Mammary epithelial cell (primary cell): ENCODE measurements at regions of chr1 and their contacts with region 1.

Region 1: DNA sequence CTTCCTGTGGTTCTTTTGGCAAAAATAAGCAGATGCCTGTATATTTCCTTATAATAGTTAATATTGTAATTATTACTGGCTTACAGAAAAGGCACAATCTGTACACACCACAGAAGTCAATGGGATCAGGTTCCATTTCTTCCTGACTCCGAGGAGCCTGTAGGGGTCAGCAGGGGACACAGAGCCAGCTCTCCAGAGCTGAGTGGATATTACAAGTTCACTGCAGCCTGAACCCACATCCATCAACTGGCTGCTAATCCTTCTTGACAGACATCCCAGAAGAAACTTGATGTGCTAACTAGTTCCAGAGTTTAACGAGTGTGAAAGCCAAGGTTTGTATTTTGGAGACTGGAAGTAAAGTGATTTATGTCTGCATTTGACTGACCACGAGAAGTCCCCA is 203.8 kb downstream of the LMX1A start:
- DNase-seq: no peak
- H3K4me3 ChIP-seq: no peak overlapping the region
- H3K27ac ChIP-seq: no peak overlapping the region
- H3K4me1 ChIP-seq: no peaks in the 10 kb centered on the region
- H3K27me3 ChIP-seq: no peaks in the 10 kb centered on the region
- CTCF ChIP-seq: peak; percentile 37 to 61

Region 2: GRCh38 chr1:165187031-165188009 is 34.6 kb after region 1 on chr1:
- CTCF ChIA-PET with region 1: no interaction called
- dilution Hi-C with region 1: loop called (anchors 5 kb)
- in situ Hi-C with region 1: no loop called
- intact Hi-C with region 1: no loop called
- DNase-seq: no peak
- H3K4me3 ChIP-seq: no peak overlapping the region
- H3K27ac ChIP-seq: no peak overlapping the region
- H3K4me1 ChIP-seq: no peaks in the 10 kb centered on the region
- H3K27me3 ChIP-seq: peaks cover 2% of the 10 kb centered on the region
- CTCF ChIP-seq: no peak

Region 3: DNA sequence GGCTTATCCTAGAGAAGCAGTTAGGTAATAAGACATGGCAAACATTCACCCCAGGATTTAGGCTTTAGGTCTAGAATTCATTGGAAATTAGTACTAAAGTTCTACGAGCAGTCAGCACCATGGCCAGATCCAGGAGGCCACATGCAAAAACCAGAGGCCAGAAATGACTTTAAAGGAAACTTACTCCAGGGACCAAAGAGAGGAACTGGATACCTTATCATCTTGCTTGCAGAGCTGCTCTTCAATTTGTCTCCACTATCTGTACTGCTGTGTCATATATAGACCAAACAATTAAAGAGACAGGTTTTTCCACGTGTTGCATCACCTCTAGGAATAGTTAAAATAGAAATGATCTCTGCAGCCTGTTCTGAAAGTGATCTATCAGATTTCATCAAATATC is 75.9 kb after region 1 on chr1:
- CTCF ChIA-PET with region 1: no interaction called
- dilution Hi-C with region 1: no loop called
- in situ Hi-C with region 1: no loop called
- intact Hi-C with region 1: loop called (anchors 2 kb)
- DNase-seq: peak; percentile 4
- H3K4me3 ChIP-seq: no peak overlapping the region
- H3K27ac ChIP-seq: no peak overlapping the region
- H3K4me1 ChIP-seq: no peaks in the 10 kb centered on the region
- H3K27me3 ChIP-seq: no peaks in the 10 kb centered on the region
- CTCF ChIP-seq: no peak

Region 4: GRCh38 chr1:165240492-165240891 is 87.8 kb after region 1 on chr1:
- CTCF ChIA-PET with region 1: no interaction called
- dilution Hi-C with region 1: no loop called
- in situ Hi-C with region 1: no loop called
- intact Hi-C with region 1: no loop called
- DNase-seq: no peak
- H3K4me3 ChIP-seq: no peak overlapping the region
- H3K27ac ChIP-seq: no peak overlapping the region
- H3K4me1 ChIP-seq: peaks cover under 1% of the 10 kb centered on the region
- H3K27me3 ChIP-seq: peaks cover 19% of the 10 kb centered on the region
- CTCF ChIP-seq: no peak

Region 5: DNA sequence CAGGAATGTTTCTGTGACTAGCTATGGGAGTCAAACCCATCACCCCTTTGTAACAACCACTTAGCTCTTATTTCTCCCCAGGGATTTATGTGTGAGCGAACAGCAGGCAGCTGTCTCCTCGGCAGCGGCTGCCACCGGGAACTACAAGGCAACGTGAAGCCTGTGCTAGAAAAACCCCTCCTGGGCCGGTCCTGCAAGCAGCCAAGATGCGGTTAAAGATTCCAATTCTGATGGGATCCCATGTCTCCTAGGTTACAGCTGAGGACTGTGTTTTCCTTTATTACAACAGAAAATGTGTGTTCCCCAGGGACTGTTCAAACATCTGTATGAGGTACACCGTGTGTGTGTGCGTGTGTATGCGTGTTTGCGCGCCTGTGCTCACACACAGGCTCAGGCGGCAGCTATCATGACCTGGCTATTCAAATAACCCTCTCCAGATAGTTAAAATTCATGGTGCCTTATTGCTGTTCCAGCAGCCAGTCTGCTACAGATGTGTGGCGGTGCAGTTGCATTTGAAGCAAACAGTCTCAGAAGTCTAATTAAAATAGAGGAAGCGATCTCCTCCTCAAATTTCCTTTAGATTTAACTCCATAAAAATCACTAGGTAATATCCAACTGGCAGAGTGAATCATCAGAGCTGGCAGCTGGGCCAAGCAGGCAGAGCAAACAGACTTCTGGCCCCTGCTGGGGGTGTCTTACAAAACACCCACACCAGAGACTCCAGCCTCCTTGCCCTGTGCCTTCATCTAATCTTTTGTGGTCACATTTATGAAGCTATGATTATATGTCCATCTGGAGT is 135.8 kb after region 1 on chr1:
- CTCF ChIA-PET with region 1: interaction called, 8 read pairs
- dilution Hi-C with region 1: no loop called
- in situ Hi-C with region 1: no loop called
- intact Hi-C with region 1: loop called (anchors 10 kb)
- DNase-seq: no peak
- H3K4me3 ChIP-seq: no peak overlapping the region
- H3K27ac ChIP-seq: no peak overlapping the region
- H3K4me1 ChIP-seq: no peaks in the 10 kb centered on the region
- H3K27me3 ChIP-seq: peaks cover 2% of the 10 kb centered on the region
- CTCF ChIP-seq: no peak

Region 6: DNA sequence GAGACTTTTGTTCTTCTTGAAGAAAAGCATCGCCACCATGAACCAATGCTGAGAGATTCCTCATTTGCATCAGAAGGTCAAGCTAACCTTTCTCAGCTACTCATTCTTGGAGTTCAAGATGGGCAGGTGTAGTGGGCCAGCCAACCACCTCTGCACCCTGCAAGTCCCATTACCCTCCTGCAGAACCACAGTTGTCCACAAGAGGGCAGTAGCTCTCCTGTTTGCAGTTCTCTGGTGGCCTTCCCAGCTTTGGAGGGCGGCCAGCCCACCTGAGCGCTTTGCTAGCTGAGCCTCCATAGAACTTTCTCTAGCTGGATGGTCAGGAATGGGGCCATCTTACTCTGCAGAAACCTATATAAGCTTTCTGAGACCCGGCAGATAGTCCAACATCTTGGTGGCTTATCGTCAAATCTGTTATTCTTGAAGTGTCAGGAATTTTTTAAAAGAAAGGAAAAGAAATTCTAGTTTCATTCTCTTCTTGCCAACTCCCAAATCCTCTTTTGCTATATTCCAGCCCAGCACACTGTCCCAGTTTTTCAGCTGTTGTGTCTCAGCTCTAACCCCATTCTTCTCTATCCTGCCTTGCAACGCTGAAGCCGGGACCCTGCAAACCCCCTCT is 214.8 kb after region 1 on chr1:
- CTCF ChIA-PET with region 1: no interaction called
- dilution Hi-C with region 1: no loop called
- in situ Hi-C with region 1: loop called (anchors 10 kb)
- intact Hi-C with region 1: loop called (anchors 2 kb)
- DNase-seq: peak; percentile 37
- H3K4me3 ChIP-seq: no peak overlapping the region
- H3K27ac ChIP-seq: no peak overlapping the region
- H3K4me1 ChIP-seq: peaks cover 13% of the 10 kb centered on the region
- H3K27me3 ChIP-seq: no peaks in the 10 kb centered on the region
- CTCF ChIP-seq: peak; percentile 94 to 95

Region 7: DNA sequence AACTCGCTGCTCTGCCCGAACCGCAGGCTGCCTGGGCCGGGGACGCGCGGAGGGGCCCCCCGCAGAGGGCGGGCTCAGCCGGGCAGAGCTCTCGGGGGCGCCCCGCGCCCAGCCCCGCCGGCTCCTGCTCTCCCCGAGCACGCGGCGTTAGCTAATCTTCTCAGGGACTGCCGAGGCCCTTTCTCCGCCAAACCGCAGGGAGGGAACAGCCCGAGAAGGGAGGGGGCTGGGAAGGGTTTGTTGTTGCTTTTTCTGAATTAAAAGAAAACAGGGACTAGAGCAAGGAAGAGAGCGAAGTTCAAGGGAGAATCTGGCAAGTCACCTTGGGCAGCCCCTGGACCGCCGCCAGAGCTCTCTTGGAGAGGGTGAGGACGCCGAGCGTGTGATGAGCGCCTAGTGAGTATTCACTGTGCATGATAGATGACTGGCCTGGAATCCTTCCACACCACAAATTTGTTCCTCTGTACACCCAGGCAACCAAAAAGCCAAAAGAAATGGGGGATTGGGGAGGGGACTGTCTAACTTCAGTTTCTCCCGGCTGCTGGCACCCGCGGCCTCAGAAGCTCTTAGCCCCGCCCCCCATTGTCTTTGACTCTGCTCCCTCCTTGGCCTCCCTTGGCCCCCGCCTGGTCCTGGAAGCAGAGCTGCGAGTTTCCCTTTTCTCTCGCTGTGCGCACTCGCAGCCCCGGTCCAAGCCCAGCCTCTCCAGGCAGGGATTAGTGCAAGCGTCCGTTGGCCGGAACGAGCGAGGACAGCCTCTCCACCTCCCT is 223.5 kb after region 1 on chr1:
- CTCF ChIA-PET with region 1: no interaction called
- dilution Hi-C with region 1: no loop called
- in situ Hi-C with region 1: loop called in 1 of 2 experiments (anchors 10 kb)
- intact Hi-C with region 1: no loop called
- DNase-seq: peak; percentile 83
- H3K4me3 ChIP-seq: peak overlapping the region in 2 of 3 experiments; percentile 17 to 18
- H3K27ac ChIP-seq: no peak overlapping the region
- H3K4me1 ChIP-seq: peaks cover 10% of the 10 kb centered on the region
- H3K27me3 ChIP-seq: peaks cover 14% of the 10 kb centered on the region
- CTCF ChIP-seq: no peak